ENCODE measurements at regions of chr12 and their contacts with region 1.

Region 1: DNA sequence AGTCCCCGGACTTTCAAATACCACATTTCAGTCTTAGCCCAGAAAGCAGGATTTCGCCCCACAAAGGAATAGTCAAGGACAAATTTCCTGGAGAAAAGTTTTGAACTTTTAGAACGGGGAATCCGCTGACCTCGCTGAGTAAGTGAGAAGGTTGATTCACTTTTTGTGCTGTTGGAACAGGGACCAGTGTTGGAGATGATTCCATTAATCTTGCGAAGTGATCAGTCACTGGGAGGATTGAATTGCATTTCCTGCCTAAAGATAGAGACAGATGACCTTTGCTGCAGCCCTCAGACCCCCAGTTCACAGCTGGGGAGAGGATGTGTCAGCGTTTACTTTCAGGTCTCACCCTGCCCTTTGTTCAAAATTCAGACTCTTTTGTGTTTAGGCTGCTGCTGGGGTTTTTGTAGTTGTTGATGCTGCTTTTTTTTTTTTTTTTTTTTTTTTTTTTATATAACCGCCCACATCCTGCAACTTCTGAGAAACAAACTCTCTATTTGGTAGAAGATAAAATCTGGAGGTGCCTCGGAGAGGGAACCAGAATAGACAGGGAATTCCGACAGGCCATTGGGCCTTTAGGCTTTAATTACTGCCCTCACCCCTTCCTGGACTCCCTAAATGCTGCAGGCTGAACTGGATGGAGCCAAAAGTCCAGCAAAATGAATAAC is 9.8 kb upstream of the KDM2B start:
- DNase-seq: peak in 8 of 9 experiments; percentile 37 to 92 (median 75)
- ATAC-seq: peak; percentile 75
- H3K4me3 ChIP-seq: peak overlapping the region; percentile 44 to 57
- H3K4me3 Mint-ChIP-seq: peak overlapping the region; percentile 89
- H3K27ac ChIP-seq: peak overlapping the region; percentile 95 to 96
- H3K27ac Mint-ChIP-seq: peak overlapping the region; percentile 100
- H3K4me1 ChIP-seq: peaks cover 30% of the 10 kb centered on the region
- H3K4me1 Mint-ChIP-seq: peaks cover 33% of the 10 kb centered on the region
- H3K27me3 ChIP-seq: no peaks in the 10 kb centered on the region
- H3K27me3 Mint-ChIP-seq: no peaks in the 10 kb centered on the region
- CTCF ChIP-seq: no peak

Region 2: DNA sequence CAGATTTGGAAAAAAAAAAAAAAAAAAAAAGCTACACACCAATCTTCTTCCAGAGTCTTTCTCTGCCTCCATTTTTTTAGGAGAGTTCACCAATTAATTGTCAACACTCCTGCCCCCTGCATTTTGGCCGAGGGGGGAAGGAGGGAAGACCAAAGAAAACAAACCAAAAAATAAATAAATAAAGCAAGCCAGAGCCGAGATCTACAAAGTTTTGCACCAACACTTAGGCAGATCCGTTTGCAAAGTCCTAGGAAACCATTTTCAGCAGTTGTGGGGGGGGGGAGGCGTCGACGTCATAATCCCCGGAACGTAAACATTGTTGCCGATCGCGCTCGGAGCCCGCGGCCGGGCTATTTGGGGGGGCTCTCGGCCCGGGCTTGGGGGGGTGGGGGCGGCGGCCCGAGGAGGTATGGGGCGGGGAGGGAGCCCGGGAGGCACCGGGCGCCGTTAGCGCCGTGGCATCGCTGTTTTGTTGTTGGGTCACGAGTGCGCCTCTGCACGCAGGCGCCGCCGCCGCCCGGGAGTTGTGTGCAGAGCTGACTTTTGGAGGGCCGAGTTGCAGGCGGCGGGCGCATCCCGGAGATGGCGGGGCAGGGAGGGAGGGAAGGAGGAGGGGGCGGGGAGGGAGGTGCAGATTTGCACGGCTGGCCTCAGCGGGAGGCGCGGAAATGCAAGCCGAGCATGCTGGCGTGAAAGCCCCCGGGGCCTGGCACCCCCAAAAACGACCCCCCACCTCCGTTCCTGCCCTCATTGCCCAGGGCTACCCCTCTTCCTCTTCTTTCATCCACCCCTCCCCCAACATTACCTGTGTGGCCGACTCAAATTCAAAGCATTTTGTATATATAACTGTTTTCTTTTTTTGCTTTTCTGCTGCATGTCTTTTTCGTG is 10.4 kb before region 1 on chr12:
- CTCF ChIA-PET with region 1: interaction called, 3 read pairs
- POLR2A ChIA-PET with region 1: interaction called, 68 read pairs
- intact Hi-C with region 1: loop called (anchors 1 kb)
- DNase-seq: peak; percentile 63 to 91 (median 82)
- ATAC-seq: peak; percentile 62
- H3K4me3 ChIP-seq: peak overlapping the region; percentile 58 to 73
- H3K4me3 Mint-ChIP-seq: peak overlapping the region; percentile 95
- H3K27ac ChIP-seq: peak overlapping the region; percentile 84 to 85
- H3K27ac Mint-ChIP-seq: peak overlapping the region; percentile 98
- H3K4me1 ChIP-seq: peaks cover 42% of the 10 kb centered on the region
- H3K4me1 Mint-ChIP-seq: peaks cover 51% of the 10 kb centered on the region
- H3K27me3 ChIP-seq: no peaks in the 10 kb centered on the region
- H3K27me3 Mint-ChIP-seq: no peaks in the 10 kb centered on the region
- CTCF ChIP-seq: no peak

Region 3: DNA sequence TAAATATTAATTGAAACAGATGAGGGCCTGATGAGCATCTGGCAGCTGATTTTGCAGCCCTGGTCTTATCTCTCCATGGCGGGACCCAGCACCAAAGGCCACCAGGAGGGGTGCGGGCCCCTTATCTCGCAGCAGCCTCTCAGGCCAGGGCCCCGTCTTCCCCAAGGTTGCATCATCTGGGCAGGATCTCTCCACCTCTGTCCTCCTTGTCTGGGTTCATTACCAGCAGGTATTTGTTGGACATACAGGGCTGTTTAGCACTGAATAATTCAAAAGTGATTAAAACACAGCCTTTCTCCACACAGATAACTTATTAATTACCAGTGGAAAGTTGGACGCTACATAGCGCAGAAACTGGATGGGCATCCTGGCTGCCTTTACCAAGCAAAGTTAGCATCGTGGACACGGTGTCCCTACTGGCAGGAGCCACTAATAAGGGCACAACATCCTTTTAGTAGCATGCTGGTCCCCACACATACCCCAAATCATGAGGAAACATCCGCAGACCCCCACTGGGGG is 147.8 kb after region 1 on chr12:
- CTCF ChIA-PET with region 1: no interaction called
- POLR2A ChIA-PET with region 1: no interaction called
- intact Hi-C with region 1: no loop called
- DNase-seq: no peak
- ATAC-seq: no peak
- H3K4me3 ChIP-seq: no peak overlapping the region
- H3K4me3 Mint-ChIP-seq: no peak overlapping the region
- H3K27ac ChIP-seq: no peak overlapping the region
- H3K27ac Mint-ChIP-seq: no peak overlapping the region
- H3K4me1 ChIP-seq: no peaks in the 10 kb centered on the region
- H3K4me1 Mint-ChIP-seq: no peaks in the 10 kb centered on the region
- H3K27me3 ChIP-seq: no peaks in the 10 kb centered on the region
- H3K27me3 Mint-ChIP-seq: no peaks in the 10 kb centered on the region
- CTCF ChIP-seq: no peak